Activated CD4-positive, alpha-beta T cell treated with anti-CD3 and anti-CD28 coated beads for 36 hours (primary cell): ENCODE measurements at regions of chr9 and their contacts with region 1.

Region 1: DNA sequence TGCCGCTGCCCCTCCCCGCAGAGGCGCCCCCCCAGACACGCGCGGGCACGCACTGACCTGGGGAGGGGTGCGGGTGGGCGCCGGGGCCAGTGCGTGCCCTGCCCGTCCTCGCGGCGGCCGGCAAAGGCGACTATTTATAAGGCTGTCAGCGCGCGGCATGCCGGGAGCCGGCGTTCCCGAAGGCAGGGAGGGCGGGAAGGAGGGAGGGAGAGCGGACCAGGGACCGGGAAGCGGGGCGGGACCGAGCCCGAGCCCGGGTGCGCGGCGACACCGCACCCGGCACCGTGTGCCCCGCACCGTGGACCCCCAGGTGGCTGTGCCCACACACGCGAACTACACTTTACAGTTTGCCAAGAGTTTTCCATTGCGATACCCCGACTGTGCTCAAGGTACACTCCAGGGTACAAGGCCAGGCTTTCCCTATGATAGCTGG is at the start of gene AK1:
- DNase-seq: no peak
- ATAC-seq: no peak
- H3K4me3 Mint-ChIP-seq: peak within 1 kb of the TSS; percentile 39
- H3K27ac Mint-ChIP-seq: no peak within 1 kb of the TSS
- H3K4me1 Mint-ChIP-seq: peaks cover 2% of the 10 kb centered on the region
- H3K27me3 Mint-ChIP-seq: peaks cover 8% of the 10 kb centered on the region
- total RNA-seq, gene AK1: 14.5 to 23.9 TPM

Region 2: DNA sequence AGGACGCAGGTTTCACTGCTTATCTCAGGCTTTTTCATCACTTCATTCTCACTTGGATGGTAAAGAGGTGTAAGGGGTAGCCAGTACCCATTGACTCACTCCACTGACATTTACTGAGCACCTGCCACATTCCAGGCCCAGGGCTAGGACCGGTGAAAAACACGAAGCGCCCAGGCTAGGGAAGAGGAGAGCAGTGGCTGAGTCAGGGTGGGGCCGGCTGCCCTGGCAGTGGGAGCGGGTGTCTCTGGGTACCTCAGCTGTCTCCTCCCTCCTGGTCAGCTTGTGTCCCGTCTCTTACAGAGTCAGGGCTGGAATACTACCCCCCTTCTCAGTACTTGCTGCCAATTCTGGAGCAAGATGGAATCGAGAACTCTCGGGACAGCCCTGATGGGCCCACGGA is 404.1 kb before region 1 on chr9:
- CTCF ChIA-PET with region 1: no interaction called
- POLR2A ChIA-PET with region 1: interaction called, 11 read pairs
- intact Hi-C with region 1: no loop called
- DNase-seq: no peak
- ATAC-seq: no peak
- H3K4me3 Mint-ChIP-seq: no peak overlapping the region
- H3K27ac Mint-ChIP-seq: no peak overlapping the region
- H3K4me1 Mint-ChIP-seq: no peaks in the 10 kb centered on the region
- H3K27me3 Mint-ChIP-seq: no peaks in the 10 kb centered on the region

Region 3: GRCh38 chr9:127684576-127684975 is 193.0 kb before region 1 on chr9:
- CTCF ChIA-PET with region 1: no interaction called
- POLR2A ChIA-PET with region 1: no interaction called
- intact Hi-C with region 1: no loop called
- DNase-seq: no peak
- ATAC-seq: no peak
- H3K4me3 Mint-ChIP-seq: no peak overlapping the region
- H3K27ac Mint-ChIP-seq: no peak overlapping the region
- H3K4me1 Mint-ChIP-seq: no peaks in the 10 kb centered on the region
- H3K27me3 Mint-ChIP-seq: no peaks in the 10 kb centered on the region

Region 4: DNA sequence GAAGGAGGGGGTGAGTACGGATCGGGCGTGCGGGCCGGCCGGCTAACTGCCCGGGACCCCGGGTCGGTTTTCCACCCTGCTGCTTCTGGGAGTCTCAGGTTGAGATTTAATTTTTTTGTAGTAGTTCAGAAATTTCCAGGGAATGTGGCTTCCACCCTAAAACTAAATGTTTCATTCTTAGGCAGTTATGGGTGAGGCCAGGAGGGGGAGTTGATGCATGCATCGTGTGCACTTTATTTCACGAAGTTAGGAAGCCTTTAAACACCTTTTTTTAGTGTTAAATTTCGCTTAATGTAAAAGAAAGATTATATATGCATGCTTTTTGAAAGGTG is 90.8 kb before region 1 on chr9:
- CTCF ChIA-PET with region 1: no interaction called
- POLR2A ChIA-PET with region 1: no interaction called
- intact Hi-C with region 1: no loop called
- DNase-seq: no peak
- ATAC-seq: no peak
- H3K4me3 Mint-ChIP-seq: peak overlapping the region; percentile 97
- H3K27ac Mint-ChIP-seq: peak overlapping the region; percentile 83
- H3K4me1 Mint-ChIP-seq: peaks cover 65% of the 10 kb centered on the region
- H3K27me3 Mint-ChIP-seq: no peaks in the 10 kb centered on the region

Region 5: GRCh38 chr9:127966416-127967150 is 89.0 kb after region 1 on chr9:
- CTCF ChIA-PET with region 1: no interaction called
- POLR2A ChIA-PET with region 1: no interaction called
- intact Hi-C with region 1: no loop called
- DNase-seq: no peak
- ATAC-seq: no peak
- H3K4me3 Mint-ChIP-seq: peak overlapping the region; percentile 22
- H3K27ac Mint-ChIP-seq: peak overlapping the region; percentile 98
- H3K4me1 Mint-ChIP-seq: peaks cover 99% of the 10 kb centered on the region
- H3K27me3 Mint-ChIP-seq: no peaks in the 10 kb centered on the region